ENCODE measurements at regions of chr1 and their contacts with region 1.

Region 1: DNA sequence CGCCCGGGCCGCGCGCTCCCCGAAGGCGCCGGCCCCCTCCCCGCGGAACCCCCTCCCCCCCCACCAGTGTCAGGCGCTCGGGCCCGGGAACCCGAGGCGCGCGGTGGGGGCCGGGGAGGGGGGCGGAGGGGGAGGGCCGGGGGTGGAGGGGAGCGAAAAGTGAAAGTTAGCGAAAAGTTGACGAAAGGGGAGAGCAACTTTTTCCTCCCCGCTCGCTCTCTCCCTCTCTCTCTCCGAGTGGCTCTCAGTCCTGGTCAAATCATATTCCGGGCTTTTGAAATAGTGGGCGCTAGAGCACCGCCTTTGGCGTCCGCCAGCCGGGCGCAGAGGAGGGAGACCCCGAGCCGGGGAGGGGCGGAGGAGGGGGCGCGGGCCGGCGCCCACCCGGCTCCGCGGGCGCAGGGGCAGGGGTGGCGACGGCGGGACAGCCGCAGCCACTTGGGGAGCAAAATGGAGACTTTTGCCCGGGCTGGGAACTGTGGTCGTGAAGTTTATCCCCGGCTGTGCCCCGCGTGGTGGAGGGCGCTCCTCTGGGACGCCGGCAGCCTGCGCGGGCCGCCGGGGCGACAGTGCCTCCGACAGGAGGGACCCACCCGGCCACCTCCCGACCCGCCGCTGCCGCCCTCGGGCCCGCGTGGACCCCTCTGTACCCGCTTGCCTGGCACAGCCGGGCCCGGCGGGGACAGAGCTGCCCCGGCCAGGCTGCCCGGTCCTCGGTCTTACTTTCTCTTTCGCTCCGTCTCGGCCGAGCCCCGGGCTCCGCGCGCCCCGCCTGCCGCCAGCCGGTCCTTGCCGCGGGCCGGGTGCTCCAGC is 694 bp downstream of the PRDM16 start:
- DNase-seq: peak in 4 of 10 donors; percentile 38 to 53 (median 42)
- H3K4me3 ChIP-seq: peak overlapping the region; percentile 41 to 79 (median 64)
- H3K27ac ChIP-seq: peak overlapping the region in 53 of 59 donors; percentile 26 to 95 (median 83)
- H3K27me3 ChIP-seq: peaks cover 0 to 93% (median 78%) of the 10 kb centered on the region in 45 donors
- CTCF ChIP-seq: peak in 51 of 56 donors; percentile 12 to 62 (median 37)

Region 2: DNA sequence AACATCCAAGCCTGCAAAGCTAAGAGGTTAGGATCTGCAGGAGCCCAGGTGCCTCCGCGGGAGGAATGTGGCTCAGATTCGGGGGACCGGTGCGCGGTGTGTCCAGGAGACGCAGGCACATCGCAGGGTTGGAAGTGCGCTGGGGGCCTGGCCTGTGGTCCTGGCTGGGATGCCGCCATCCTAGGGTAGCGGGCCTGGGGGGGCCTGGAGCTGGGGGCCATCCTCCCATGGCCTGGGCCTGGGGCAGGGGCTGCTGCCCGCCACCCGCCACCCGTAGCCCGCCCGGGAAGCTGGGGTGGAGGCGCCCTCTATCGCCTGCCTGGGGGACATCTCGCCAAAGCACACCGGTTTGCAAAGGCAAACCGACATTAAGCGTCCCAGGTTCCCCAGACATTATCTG is 214.2 kb after region 1 on chr1:
- intact Hi-C with region 1: loop called in 1 of 2 experiments (anchors 2 kb)
- DNase-seq: peak in 6 of 10 donors; percentile 36 to 72 (median 51)
- H3K4me3 ChIP-seq: no peak overlapping the region
- H3K27ac ChIP-seq: peak overlapping the region in 7 of 59 donors; percentile 1 to 41 (median 10)
- H3K27me3 ChIP-seq: peaks cover 0 to 44% (median 0%) of the 10 kb centered on the region in 45 donors
- CTCF ChIP-seq: peak; percentile 43 to 88 (median 77)

Region 3: GRCh38 chr1:3598051-3598491 is 528.4 kb after region 1 on chr1:
- intact Hi-C with region 1: no loop called
- DNase-seq: no peak
- H3K4me3 ChIP-seq: peak overlapping the region in 19 of 59 donors; percentile 3 to 45 (median 20)
- H3K27ac ChIP-seq: peak overlapping the region in 1 of 59 donors; percentile 57
- H3K27me3 ChIP-seq: no peaks in the 10 kb centered on the region
- CTCF ChIP-seq: no peak